T-cell (primary cell): ENCODE measurements at regions of chr3 and their contacts with region 1.

Region 1: GRCh38 chr3:38521391-38521987 is 25.3 kb downstream of the EXOG start:
- DNase-seq: peak; percentile 19 to 82 (median 48)
- ATAC-seq: peak in 2 of 4 experiments; percentile 42 to 61
- H3K4me3 ChIP-seq: no peak overlapping the region
- H3K4me3 Mint-ChIP-seq: no peak overlapping the region
- H3K27ac ChIP-seq: no peak overlapping the region
- H3K27ac Mint-ChIP-seq: peak overlapping the region in 1 of 2 donors; percentile 76
- H3K4me1 ChIP-seq: peaks cover 11 to 23% of the 10 kb centered on the region in 2 experiments
- H3K4me1 Mint-ChIP-seq: peaks cover 35 to 39% (median 36%) of the 10 kb centered on the region in 3 donors
- H3K27me3 ChIP-seq: no peaks in the 10 kb centered on the region
- H3K27me3 Mint-ChIP-seq: no peaks in the 10 kb centered on the region

Region 2: DNA sequence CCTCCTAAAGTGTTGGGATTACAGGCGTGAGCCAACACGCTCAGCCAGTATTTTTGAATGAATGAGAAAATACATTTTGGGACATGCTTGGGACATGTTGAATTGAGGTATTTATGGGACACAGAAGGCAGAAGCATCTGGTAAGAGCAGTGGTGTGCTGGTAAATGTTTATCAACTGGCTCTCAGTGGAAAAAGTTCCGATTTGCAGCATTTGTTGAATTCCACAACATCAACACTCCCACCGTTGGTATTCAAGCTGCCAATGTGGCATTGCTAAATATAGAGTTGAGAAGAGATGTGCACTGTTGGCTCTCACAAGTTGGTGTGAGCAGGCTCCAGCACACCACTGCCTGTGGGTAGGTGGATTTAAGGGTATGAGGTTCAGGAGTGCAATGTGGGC is 1311.3 kb before region 1 on chr3:
- CTCF ChIA-PET with region 1: no interaction called
- POLR2A ChIA-PET with region 1: interaction called in 1 of 2 experiments, 10 read pairs
- DNase-seq: no peak
- ATAC-seq: no peak
- H3K4me3 ChIP-seq: no peak overlapping the region
- H3K4me3 Mint-ChIP-seq: no peak overlapping the region
- H3K27ac ChIP-seq: no peak overlapping the region
- H3K27ac Mint-ChIP-seq: no peak overlapping the region
- H3K4me1 ChIP-seq: no peaks in the 10 kb centered on the region
- H3K4me1 Mint-ChIP-seq: peaks cover 0 to 10% (median 2%) of the 10 kb centered on the region in 3 donors
- H3K27me3 ChIP-seq: no peaks in the 10 kb centered on the region
- H3K27me3 Mint-ChIP-seq: no peaks in the 10 kb centered on the region

Region 3: DNA sequence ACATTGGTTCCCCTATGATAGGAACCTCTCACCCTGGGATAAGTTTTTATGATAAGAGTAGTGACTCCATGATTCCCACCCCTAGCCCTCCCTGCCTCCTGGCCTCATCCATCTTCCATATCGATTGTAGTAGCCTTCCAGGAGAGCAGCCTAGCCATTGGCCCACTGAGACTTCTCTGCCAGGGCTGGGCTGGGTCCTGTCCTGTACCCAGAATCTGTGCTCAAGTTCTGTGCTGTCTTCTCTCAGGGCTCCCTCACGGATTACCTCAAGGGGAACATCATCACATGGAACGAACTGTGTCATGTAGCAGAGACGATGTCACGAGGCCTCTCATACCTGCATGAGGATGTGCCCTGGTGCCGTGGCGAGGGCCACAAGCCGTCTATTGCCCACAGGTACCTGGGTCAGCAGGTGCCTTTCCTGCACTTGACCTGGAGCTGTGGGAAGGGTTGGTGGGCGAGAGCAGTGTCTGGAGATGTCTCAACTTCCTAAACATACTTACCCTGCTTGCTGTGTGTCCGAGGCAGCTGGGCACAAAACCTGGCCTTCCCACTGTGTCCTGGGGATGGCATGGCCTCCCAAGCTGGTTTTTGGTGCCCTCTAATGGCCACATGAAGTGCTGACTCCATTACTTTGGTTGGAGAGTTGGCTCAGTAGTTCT is 41.9 kb before region 1 on chr3:
- CTCF ChIA-PET with region 1: interaction called, 4 to 10 read pairs
- POLR2A ChIA-PET with region 1: no interaction called
- DNase-seq: peak in 27 of 35 experiments; percentile 11 to 74 (median 29)
- ATAC-seq: peak in 3 of 4 experiments; percentile 63 to 80 (median 73)
- H3K4me3 ChIP-seq: no peak overlapping the region
- H3K4me3 Mint-ChIP-seq: no peak overlapping the region
- H3K27ac ChIP-seq: no peak overlapping the region
- H3K27ac Mint-ChIP-seq: no peak overlapping the region
- H3K4me1 ChIP-seq: no peaks in the 10 kb centered on the region
- H3K4me1 Mint-ChIP-seq: peaks cover 0 to 20% (median 4%) of the 10 kb centered on the region in 3 donors
- H3K27me3 ChIP-seq: no peaks in the 10 kb centered on the region
- H3K27me3 Mint-ChIP-seq: no peaks in the 10 kb centered on the region

Region 4: GRCh38 chr3:38496131-38496910 is 25.2 kb before region 1 on chr3 and contains the start of gene EXOG:
- CTCF ChIA-PET with region 1: interaction called, 7 to 31 read pairs
- POLR2A ChIA-PET with region 1: interaction called, 3 to 11 read pairs
- DNase-seq: peak; percentile 86 to 96 (median 92)
- ATAC-seq: peak; percentile 91 to 97 (median 92)
- H3K4me3 ChIP-seq: peak within 1 kb of the TSS; percentile 78 to 96
- H3K4me3 Mint-ChIP-seq: peak within 1 kb of the TSS; percentile 96 to 97 (median 97)
- H3K27ac ChIP-seq: peak within 1 kb of the TSS; percentile 52
- H3K27ac Mint-ChIP-seq: peak within 1 kb of the TSS; percentile 71 to 90
- H3K4me1 ChIP-seq: peaks cover 2 to 14% of the 10 kb centered on the region in 2 experiments
- H3K4me1 Mint-ChIP-seq: peaks cover 23 to 31% (median 24%) of the 10 kb centered on the region in 3 donors
- H3K27me3 ChIP-seq: no peaks in the 10 kb centered on the region
- H3K27me3 Mint-ChIP-seq: no peaks in the 10 kb centered on the region
- total RNA-seq, gene EXOG: 21.5 to 24.8 (median 22.9) TPM

Region 5: GRCh38 chr3:38510631-38511030 is 10.9 kb before region 1 on chr3:
- CTCF ChIA-PET with region 1: interaction called, 6 to 17 read pairs
- POLR2A ChIA-PET with region 1: no interaction called
- DNase-seq: no peak
- ATAC-seq: no peak
- H3K4me3 ChIP-seq: no peak overlapping the region
- H3K4me3 Mint-ChIP-seq: no peak overlapping the region
- H3K27ac ChIP-seq: no peak overlapping the region
- H3K27ac Mint-ChIP-seq: no peak overlapping the region
- H3K4me1 ChIP-seq: no peaks in the 10 kb centered on the region
- H3K4me1 Mint-ChIP-seq: peaks cover 0 to 6% (median 0%) of the 10 kb centered on the region in 3 donors
- H3K27me3 ChIP-seq: no peaks in the 10 kb centered on the region
- H3K27me3 Mint-ChIP-seq: no peaks in the 10 kb centered on the region

Region 6: DNA sequence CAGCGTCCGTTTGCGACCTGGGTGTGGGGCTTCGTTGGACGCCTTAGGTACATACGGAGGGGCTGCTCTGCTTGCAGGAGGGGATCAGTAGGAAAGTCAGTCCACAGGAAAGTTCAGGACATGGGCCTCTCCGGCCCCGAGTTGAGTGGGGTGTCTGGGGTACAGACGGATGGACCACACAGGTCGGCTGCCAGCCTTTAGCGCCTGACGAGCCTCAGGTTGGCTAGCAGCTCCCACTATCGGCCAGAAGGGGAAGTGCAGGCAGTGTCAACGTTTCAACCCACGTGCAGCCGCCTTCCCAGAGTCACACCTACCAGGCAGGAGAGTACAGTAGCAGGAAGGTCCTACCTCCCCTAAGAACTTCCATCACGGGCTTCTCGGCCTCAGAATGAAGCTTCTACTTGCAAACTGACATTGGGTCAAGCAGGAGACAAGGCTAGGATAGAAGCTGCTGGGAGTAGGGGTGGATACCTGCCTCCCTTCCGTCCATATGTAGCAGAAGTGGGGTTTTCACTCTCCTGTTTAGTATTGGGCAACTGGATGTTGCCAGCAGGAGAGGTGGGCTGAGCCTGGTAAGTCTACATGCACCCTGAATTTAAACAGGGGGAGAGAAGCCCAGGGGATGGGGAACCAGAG is 129.8 kb after region 1 on chr3:
- CTCF ChIA-PET with region 1: interaction called, 10 to 17 read pairs
- POLR2A ChIA-PET with region 1: no interaction called
- DNase-seq: peak; percentile 34 to 85 (median 53)
- ATAC-seq: peak; percentile 54 to 72 (median 58)
- H3K4me3 ChIP-seq: no peak overlapping the region
- H3K4me3 Mint-ChIP-seq: peak overlapping the region in 2 of 3 donors; percentile 25 to 49
- H3K27ac ChIP-seq: no peak overlapping the region
- H3K27ac Mint-ChIP-seq: no peak overlapping the region
- H3K4me1 ChIP-seq: peaks cover 0 to 30% of the 10 kb centered on the region in 2 experiments
- H3K4me1 Mint-ChIP-seq: peaks cover 4 to 9% (median 9%) of the 10 kb centered on the region in 3 donors
- H3K27me3 ChIP-seq: peaks cover 2 to 60% of the 10 kb centered on the region in 2 experiments
- H3K27me3 Mint-ChIP-seq: peaks cover 13 to 21% of the 10 kb centered on the region in 2 donors

Region 7: DNA sequence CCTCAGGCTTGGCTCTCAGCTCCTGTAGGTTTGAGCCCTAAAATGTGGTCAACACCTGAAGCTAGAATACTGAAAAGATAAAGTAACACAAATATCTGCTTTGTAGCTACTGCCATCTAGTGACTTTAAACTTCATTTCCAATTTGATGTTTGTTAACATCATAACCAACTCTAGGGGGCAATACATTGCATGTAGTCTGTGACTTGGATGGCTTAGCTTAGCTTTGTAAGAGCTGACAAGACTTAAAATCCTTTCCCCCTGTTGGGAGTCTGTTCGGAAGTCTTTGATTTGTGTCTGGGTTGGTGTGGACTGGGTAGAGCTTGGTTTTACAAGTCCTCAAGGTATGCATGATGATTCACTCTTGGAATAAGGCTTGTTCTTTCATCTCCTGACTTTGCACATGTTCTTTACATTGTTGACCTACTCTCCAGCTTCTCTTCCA is 478.5 kb after region 1 on chr3:
- CTCF ChIA-PET with region 1: interaction called in 1 of 2 experiments, 10 read pairs
- POLR2A ChIA-PET with region 1: no interaction called
- DNase-seq: peak in 1 of 35 experiments; percentile 52
- ATAC-seq: peak in 3 of 4 experiments; percentile 43 to 57 (median 46)
- H3K4me3 ChIP-seq: no peak overlapping the region
- H3K4me3 Mint-ChIP-seq: no peak overlapping the region
- H3K27ac ChIP-seq: no peak overlapping the region
- H3K27ac Mint-ChIP-seq: no peak overlapping the region
- H3K4me1 ChIP-seq: no peaks in the 10 kb centered on the region
- H3K4me1 Mint-ChIP-seq: no peaks in the 10 kb centered on the region
- H3K27me3 ChIP-seq: peaks cover 0 to 3% of the 10 kb centered on the region in 2 experiments
- H3K27me3 Mint-ChIP-seq: peaks cover 6 to 20% of the 10 kb centered on the region in 2 donors